ENCODE measurements at regions of chr15 and their contacts with region 1.

Region 1: GRCh38 chr15:85044251-85044853 is 62.7 kb downstream of the PDE8A start:
- DNase-seq: peak; percentile 80
- H3K4me3 Mint-ChIP-seq: no peak overlapping the region
- H3K27ac Mint-ChIP-seq: no peak overlapping the region
- H3K4me1 Mint-ChIP-seq: peaks cover 8% of the 10 kb centered on the region
- H3K27me3 Mint-ChIP-seq: no peaks in the 10 kb centered on the region

Region 2: DNA sequence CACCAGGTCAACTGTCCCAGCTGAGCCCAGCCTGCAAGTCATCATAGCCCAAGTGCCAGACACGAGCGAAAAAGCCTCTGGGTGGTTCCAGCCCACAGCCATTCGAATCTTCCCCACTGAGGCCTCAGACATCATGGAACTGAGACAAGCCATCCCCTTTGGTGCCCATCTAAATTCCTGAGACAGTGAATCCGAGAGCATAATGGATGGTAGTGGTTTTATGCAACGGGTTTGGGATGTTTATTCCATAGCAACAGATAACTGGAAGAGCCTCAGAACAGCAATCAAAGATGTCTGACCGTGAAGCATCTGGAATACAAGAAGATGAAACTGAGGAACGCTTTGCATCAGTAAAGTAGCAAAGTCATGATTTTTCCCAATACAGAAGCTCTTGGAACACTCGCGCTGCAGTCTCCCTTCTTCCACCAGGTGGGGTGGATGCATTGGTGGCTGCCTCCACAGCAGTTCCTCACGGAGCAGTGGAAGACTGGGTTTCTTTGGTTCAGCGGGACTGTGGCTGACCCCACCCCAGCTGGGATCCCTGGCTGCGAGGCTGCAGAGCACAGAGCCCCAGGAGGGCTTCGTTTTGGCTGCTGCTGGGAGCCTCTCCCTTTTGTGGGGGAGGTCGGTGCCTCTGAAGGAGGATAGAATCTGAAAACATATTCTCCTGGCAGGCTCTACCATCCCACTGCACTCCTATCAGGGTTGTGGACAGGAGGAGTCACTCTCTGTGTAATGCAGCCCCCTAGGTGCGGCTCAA is 89.1 kb before region 1 on chr15:
- intact Hi-C with region 1: loop called (anchors 1 kb)
- DNase-seq: peak; percentile 72
- H3K4me3 Mint-ChIP-seq: no peak overlapping the region
- H3K27ac Mint-ChIP-seq: no peak overlapping the region
- H3K4me1 Mint-ChIP-seq: peaks cover 2% of the 10 kb centered on the region
- H3K27me3 Mint-ChIP-seq: peaks cover 31% of the 10 kb centered on the region

Region 3: GRCh38 chr15:85062560-85062959 is 18.2 kb after region 1 on chr15:
- intact Hi-C with region 1: no loop called
- DNase-seq: no peak
- H3K4me3 Mint-ChIP-seq: no peak overlapping the region
- H3K27ac Mint-ChIP-seq: no peak overlapping the region
- H3K4me1 Mint-ChIP-seq: peaks cover 2% of the 10 kb centered on the region
- H3K27me3 Mint-ChIP-seq: no peaks in the 10 kb centered on the region

Measured in activated CD4-positive, alpha-beta T cell treated with anti-CD3 and anti-CD28 coated beads, Interleukin-2, amount 10 ng/mL, durations not matched to agents 24 days and 14 days (primary cell).